CD4-positive, alpha-beta T cell (primary cell): ENCODE measurements at regions of chr16 and their contacts with region 1.

Region 1: GRCh38 chr16:15564604-15565339 is 78.2 kb downstream of the MARF1 start:
- DNase-seq: no peak
- ATAC-seq: no peak
- H3K4me3 ChIP-seq: no peak overlapping the region
- H3K4me3 Mint-ChIP-seq: no peak overlapping the region
- H3K27ac ChIP-seq: no peak overlapping the region
- H3K27ac Mint-ChIP-seq: no peak overlapping the region
- H3K4me1 ChIP-seq: no peaks in the 10 kb centered on the region
- H3K4me1 Mint-ChIP-seq: no peaks in the 10 kb centered on the region
- H3K27me3 ChIP-seq: no peaks in the 10 kb centered on the region
- H3K27me3 Mint-ChIP-seq: no peaks in the 10 kb centered on the region
- CTCF ChIP-seq: no peak

Region 2: GRCh38 chr16:15548482-15548891 is 16.3 kb before region 1 on chr16:
- CTCF ChIA-PET with region 1: no interaction called
- POLR2A ChIA-PET with region 1: no interaction called
- intact Hi-C with region 1: loop called in 1 of 2 experiments (anchors 2 kb)
- DNase-seq: no peak
- ATAC-seq: no peak
- H3K4me3 ChIP-seq: no peak overlapping the region
- H3K4me3 Mint-ChIP-seq: no peak overlapping the region
- H3K27ac ChIP-seq: no peak overlapping the region
- H3K27ac Mint-ChIP-seq: no peak overlapping the region
- H3K4me1 ChIP-seq: no peaks in the 10 kb centered on the region
- H3K4me1 Mint-ChIP-seq: no peaks in the 10 kb centered on the region
- H3K27me3 ChIP-seq: no peaks in the 10 kb centered on the region
- H3K27me3 Mint-ChIP-seq: peaks cover 5% of the 10 kb centered on the region
- CTCF ChIP-seq: no peak